AG04449 (cell line): ENCODE measurements at regions of chr5 and their contacts with region 1.

Region 1: GRCh38 chr5:157718519-157718918 is 12.7 kb upstream of the THG1L start:
- DNase-seq: no peak
- H3K4me3 ChIP-seq: no peak overlapping the region
- CTCF ChIP-seq: peak; percentile 55

Region 2: DNA sequence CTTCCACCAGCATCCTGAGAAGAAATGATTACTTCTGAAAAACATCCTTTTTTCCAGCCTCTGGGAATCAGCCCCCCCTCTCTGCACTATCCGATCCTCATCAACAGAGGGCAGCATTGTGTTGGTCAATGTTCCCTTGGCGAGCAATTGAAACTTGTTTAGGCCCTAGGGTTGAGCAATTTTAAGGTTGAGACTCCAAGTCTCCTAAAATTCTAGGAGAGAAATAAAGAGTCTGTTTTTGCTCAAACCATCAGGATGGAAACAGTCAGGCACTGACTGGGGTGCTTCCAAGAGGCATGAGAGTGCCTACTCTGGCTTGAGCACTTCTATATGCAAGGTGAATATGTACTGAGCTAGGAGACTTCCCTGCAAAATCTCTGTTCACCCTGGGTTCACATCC is 465.0 kb before region 1 on chr5:
- CTCF ChIA-PET with region 1: interaction called, 11 read pairs
- POLR2A ChIA-PET with region 1: no interaction called
- DNase-seq: no peak
- H3K4me3 ChIP-seq: no peak overlapping the region
- CTCF ChIP-seq: peak; percentile 86

Region 3: DNA sequence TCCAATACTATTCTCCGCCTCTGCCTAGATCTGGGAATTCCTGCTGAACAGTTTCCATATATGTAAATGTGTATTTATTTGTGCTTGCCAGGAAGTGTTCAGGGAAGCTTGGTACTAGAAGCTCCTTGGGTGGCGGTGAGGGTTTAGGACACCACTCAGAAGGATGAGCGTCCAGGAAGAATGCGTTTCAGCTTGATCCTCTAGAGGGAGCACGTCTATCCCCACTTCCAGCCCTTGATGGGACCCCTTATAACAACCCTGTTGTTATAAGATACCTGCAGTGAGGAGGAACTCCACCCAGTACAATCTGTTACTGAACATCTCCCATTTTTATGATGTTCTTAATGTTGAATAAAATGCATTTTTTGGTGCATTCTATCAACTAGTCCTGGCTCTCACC is 363.7 kb before region 1 on chr5:
- CTCF ChIA-PET with region 1: interaction called, 17 read pairs
- POLR2A ChIA-PET with region 1: no interaction called
- DNase-seq: no peak
- H3K4me3 ChIP-seq: no peak overlapping the region
- CTCF ChIP-seq: peak; percentile 34

Region 4: GRCh38 chr5:157431544-157432200 is 286.8 kb before region 1 on chr5:
- CTCF ChIA-PET with region 1: interaction called, 31 read pairs
- POLR2A ChIA-PET with region 1: no interaction called
- DNase-seq: peak; percentile 16
- H3K4me3 ChIP-seq: no peak overlapping the region
- CTCF ChIP-seq: peak; percentile 34

Region 5: DNA sequence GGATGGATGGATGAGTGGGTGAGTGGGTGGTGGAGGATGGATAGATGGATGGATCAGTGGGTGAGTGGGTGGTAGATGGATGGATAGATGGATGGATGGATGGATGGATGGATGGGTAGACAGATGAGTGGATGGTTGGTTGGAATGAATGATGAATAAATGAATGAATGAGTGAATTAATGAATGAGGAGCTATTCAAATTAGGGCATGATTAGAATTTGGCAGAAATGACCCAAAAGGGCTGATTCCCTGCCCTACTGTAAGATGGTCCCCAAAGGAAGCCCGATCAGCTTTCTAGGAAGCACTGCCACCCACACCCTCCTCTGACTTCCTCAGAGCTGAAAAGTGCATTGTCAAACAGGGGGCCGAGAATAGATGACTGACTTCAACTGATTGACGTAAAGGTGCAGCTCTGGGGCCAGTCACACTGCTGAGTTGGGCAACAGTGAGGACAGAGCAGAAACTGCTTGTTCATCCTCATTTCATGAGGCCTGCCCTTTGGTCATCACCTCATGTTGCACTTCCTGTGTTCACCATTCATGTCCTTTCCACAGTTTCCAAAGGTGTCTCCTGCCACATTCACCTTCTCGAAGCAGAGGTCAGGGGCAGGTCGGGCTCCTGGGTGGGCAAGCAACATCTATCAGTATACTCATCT is 224.2 kb before region 1 on chr5:
- CTCF ChIA-PET with region 1: interaction called, 15 read pairs
- POLR2A ChIA-PET with region 1: no interaction called
- DNase-seq: no peak
- H3K4me3 ChIP-seq: no peak overlapping the region
- CTCF ChIP-seq: no peak

Region 6: DNA sequence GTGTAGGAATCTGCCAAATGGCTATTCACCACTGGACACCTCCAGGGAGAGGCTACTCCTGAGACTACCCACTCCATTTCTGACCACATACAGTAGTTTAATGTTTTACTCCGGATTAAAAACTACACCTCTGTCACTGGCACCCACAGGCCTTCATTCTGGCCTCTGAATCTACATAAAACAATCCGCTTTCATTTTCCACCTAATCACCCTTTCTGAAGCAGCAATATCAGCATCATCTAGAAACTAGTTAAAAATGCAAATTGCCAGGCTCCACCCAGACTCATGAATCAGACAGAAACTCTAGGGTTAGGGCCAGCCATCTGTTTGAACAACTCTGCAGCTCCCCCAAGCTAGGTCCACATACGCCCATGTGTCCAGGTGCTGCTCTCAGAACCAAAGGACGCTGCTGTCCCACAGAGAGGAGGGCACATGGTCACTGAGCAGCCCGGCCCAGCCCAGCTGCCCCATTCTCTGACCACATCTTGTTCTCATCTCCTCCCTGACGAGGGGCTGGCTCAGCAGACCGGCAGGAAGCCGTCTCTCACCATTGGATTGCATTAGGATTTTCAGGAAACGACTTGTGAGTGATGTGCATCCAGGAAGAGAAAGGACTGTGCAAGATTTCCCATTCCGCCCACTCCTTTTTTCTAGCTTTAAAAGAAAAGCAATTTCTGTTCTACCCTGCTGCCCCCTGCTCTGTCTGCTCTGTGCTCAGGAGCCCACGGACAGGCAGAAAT is 177.6 kb before region 1 on chr5:
- CTCF ChIA-PET with region 1: interaction called, 14 read pairs
- POLR2A ChIA-PET with region 1: no interaction called
- DNase-seq: no peak
- H3K4me3 ChIP-seq: no peak overlapping the region
- CTCF ChIP-seq: no peak

Region 7: GRCh38 chr5:157651623-157652549 is 66.6 kb before region 1 on chr5 and contains the start of gene SOX30:
- CTCF ChIA-PET with region 1: no interaction called
- POLR2A ChIA-PET with region 1: no interaction called
- DNase-seq: no peak
- H3K4me3 ChIP-seq: peak within 1 kb of the TSS; percentile 44
- CTCF ChIP-seq: peak; percentile 44

Region 8: DNA sequence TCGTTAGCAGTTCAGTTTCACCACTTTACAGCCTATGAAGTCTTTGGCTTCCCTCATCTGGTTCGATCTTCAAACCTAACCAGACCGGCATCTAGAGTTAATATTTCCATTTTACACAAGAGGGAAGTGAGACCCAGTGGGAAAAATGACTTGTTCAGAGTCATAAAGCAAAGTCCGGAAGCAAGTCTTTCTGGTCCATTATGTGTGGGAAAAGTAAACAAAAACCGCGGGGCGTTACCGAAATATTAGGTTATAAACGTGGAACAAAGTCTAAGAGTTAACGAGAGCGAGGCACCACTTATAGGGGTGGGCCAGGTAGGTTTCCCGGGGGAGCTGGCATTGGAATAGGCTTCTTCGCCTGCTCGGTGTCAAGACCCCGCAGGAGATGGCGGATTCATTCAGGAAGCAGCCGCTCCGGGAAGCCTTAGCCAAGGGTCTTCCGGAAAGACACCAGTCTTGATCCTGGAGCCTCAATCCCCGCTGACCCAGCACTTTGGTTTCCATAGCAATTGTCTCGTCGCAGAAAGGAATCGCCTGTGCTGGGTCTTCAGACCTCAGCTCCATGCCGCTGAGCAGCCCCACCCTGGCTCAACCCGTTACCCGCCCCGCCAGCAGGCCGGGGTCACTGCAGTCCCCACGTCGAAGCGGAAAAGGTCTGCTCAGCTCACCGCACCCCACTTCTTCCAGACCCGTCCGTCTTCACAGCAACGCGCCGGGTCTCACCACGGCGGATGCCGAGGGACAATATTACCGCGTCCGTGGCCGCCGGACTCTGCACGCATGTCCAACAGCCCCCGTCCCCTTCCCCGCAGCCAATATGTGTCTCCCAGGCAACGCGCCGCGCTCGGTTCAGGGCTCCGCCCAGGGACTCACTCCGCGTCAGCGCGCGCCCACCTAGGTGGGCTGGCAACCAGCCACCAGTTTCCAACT is 47.6 kb before region 1 on chr5 and contains the start of gene C5orf52:
- CTCF ChIA-PET with region 1: interaction called, 41 read pairs
- POLR2A ChIA-PET with region 1: no interaction called
- DNase-seq: no peak
- H3K4me3 ChIP-seq: peak within 1 kb of the TSS; percentile 71
- CTCF ChIP-seq: no peak

Region 9: GRCh38 chr5:157689942-157690689 is 28.4 kb before region 1 on chr5:
- CTCF ChIA-PET with region 1: no interaction called
- POLR2A ChIA-PET with region 1: no interaction called
- DNase-seq: no peak
- H3K4me3 ChIP-seq: no peak overlapping the region; the same call in 1 of the 2 replicates
- CTCF ChIP-seq: no peak